ENCODE measurements at regions of chr19 and their contacts with region 1.

Region 1: DNA sequence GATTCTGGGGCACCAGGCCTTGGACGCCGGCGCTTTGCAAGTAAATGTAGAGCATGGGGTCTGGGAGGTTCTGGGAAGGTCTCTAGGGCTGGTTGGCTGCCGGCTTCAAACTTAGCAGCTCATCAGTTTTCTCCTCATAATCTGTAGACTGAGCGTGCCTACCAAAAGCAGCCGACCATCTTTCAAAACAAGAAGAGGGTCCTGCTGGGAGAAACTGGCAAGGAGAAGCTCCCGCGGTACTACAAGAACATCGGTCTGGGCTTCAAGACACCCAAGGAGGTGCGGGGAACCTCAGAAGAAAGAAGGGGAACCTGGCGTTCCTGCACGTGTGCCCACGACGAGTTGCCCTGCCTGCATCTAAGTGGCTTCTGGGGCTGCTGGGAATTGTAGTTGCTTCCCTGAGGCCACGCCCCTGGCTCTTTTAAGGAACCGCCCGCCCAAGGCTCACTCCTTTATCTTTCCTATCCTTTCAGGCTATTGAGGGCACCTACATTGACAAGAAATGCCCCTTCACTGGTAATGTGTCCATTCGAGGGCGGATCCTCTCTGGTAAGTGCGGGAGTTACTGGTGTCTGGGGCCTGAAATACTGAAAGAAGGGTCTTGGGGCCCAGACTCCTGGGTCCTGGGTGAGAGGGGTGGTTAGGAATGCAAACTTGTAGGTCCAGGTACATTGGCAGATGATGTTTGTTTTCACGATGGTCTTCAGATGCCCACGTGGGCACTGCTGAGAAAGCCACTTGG is 984 bp downstream of the RPS11 start:
- DNase-seq: peak; percentile 55 to 61
- H3K4me3 ChIP-seq: peak overlapping the region; percentile 89
- H3K27ac ChIP-seq: peak overlapping the region; percentile 91
- H3K4me1 ChIP-seq: peaks cover 22% of the 10 kb centered on the region
- H3K27me3 ChIP-seq: no peaks in the 10 kb centered on the region
- CTCF ChIP-seq: no peak

Region 2: GRCh38 chr19:49451430-49452181 is 45.6 kb before region 1 on chr19 and contains the start of gene PIH1D1:
- CTCF ChIA-PET with region 1: no interaction called
- POLR2A ChIA-PET with region 1: interaction called, 3 read pairs
- intact Hi-C with region 1: loop called (anchors 2 kb)
- DNase-seq: peak; percentile 96 to 100
- H3K4me3 ChIP-seq: peak within 1 kb of the TSS; percentile 87
- H3K27ac ChIP-seq: peak within 1 kb of the TSS; percentile 92
- H3K4me1 ChIP-seq: peaks cover 13% of the 10 kb centered on the region
- H3K27me3 ChIP-seq: no peaks in the 10 kb centered on the region
- CTCF ChIP-seq: no peak
- total RNA-seq, gene PIH1D1: 156 and 184 TPM in 2 replicates

Region 3: DNA sequence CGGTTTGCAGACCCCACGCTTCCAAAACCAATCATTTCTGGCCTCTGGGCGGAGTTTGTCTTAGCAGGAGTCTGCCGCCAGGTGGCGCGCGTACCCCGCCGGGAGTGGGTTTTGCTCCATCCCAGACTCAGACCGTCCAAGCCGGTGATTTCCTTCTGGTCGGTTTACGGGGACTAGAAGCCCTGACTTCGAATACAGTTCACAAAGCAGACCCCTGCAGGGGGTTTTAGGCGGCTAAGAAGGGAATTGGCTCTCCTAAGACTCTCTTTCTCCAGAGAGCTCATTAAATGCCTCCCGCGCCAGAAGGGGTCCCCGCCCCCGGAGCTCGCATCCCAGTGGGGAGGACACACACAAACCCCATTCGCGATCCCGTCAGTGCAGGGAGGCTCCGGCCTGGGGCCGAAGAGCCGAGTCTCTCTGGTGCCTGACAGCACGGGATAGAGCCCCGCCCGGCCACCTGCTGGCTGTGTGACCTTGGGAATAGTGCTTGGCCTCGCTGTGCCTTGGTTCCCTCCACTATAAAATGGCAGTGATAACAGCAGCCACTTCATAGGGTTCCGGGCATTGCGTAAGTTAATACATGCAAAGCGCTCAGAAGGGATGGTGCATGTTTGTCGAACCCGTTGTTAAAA is 440.6 kb after region 1 on chr19:
- CTCF ChIA-PET with region 1: no interaction called
- POLR2A ChIA-PET with region 1: interaction called, 13 read pairs
- intact Hi-C with region 1: no loop called
- DNase-seq: peak; percentile 51 to 73
- H3K4me3 ChIP-seq: peak overlapping the region; percentile 9; the same call in 1 of the 2 replicates
- H3K27ac ChIP-seq: no peak overlapping the region
- H3K4me1 ChIP-seq: peaks cover 13% of the 10 kb centered on the region
- H3K27me3 ChIP-seq: no peaks in the 10 kb centered on the region
- CTCF ChIP-seq: peak; percentile 99

Measured in PC-9 (cell line).